BJ (cell line): ENCODE measurements at regions of chr19 and their contacts with region 1.

Region 1: GRCh38 chr19:17390665-17391370 is 3.2 kb downstream of the CCDC194 start:
- DNase-seq: peak; percentile 52
- H3K4me3 ChIP-seq: peak overlapping the region; percentile 62
- H3K27me3 ChIP-seq: peaks cover 2% of the 10 kb centered on the region; the same call in 1 of the 2 replicates
- CTCF ChIP-seq: peak; percentile 63

Region 2: GRCh38 chr19:17292286-17293097 is 98.3 kb before region 1 on chr19:
- CTCF ChIA-PET with region 1: interaction called, 31 read pairs
- POLR2A ChIA-PET with region 1: no interaction called
- DNase-seq: peak; percentile 39
- H3K4me3 ChIP-seq: peak overlapping the region; percentile 58
- H3K27me3 ChIP-seq: no peaks in the 10 kb centered on the region
- CTCF ChIP-seq: peak; percentile 80

Region 3: DNA sequence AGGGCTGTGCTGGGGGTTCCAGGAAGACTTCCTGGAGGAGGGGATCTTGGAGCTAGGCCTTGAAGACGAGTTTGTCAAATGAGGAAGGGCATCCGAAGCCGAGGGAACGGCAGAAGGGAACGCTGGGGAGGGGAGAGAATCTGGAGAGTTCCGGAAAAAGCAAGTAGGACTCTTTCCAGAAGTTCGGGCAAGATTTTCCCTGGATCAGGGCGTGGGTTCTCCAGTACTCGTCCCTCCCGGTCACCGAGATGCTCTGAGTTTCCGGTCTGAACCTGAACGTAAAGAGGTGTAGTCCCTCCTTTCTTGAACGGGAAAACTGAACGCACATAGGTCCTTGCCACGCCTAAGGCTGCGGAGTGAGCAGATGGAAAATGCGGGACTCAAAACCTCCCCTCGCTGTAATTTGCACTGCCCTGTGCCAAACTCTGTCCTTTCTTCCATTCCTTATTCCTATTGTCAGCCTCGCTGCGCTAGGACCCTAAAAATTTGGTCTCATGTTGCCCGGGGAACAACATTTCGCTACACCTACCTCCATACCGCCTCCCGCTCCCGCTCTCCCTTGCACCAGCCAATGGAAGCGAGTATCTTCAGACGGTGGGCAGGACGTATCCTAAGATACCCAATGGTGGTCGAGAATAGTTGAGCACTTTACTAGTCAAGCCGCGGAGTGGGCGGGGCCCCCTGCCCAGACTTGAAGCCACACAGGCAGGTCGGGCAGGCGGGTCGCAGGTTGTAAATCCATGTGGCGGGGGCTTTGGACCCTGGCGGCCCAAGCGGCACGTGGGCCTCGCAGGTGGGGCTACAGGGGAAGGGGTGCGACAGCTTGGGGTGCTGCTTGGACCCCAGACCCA is 53.7 kb before region 1 on chr19 and contains the start of gene GTPBP3:
- CTCF ChIA-PET with region 1: interaction called, 121 read pairs
- POLR2A ChIA-PET with region 1: no interaction called
- DNase-seq: peak; percentile 86
- H3K4me3 ChIP-seq: peak within 1 kb of the TSS; percentile 72
- H3K27me3 ChIP-seq: no peaks in the 10 kb centered on the region
- CTCF ChIP-seq: no peak
- polyA plus RNA-seq, gene GTPBP3: 4.9 and 6.3 TPM in 2 replicates

Region 4: GRCh38 chr19:17370026-17370587 is 20.7 kb before region 1 on chr19:
- CTCF ChIA-PET with region 1: interaction called, 15 read pairs
- POLR2A ChIA-PET with region 1: no interaction called
- DNase-seq: no peak
- H3K4me3 ChIP-seq: no peak overlapping the region
- H3K27me3 ChIP-seq: no peaks in the 10 kb centered on the region
- CTCF ChIP-seq: no peak

Region 5: DNA sequence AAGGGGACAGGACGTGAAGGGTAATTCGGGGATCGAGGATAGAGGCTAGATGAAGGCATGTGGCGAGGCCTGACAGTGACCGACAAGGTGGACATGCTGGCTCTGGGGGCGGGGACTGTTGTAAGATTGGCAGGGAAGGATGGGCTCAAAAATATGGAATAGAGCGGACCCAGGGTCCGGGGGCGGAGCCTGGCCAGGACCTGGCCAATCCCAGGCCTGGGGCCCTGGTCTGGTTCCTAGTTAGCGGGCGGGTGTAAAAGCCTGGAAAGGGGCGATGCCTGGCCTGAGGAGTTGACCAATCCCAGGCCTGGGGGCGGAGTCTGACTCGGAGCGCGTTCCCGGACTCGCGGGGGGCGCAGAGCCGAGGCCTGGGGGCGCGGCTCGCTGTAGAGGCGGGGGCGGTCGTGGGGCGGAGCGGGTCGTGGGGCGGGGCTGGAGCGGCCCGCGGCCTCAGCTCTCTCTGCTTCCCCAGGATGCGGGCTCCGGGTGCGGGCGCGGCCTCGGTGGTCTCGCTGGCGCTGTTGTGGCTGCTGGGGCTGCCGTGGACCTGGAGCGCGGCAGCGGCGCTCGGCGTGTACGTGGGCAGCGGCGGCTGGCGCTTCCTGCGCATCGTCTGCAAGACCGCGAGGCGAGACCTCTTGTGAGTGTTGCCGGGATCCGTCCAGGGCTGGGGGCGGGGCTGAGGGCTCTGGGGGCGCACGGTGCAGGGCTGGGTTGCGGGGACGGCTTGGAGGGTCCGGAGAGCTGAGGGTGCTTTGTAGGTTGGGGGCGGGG is 79.4 kb after region 1 on chr19 and contains the start of gene SLC27A1:
- CTCF ChIA-PET with region 1: interaction called, 18 read pairs
- POLR2A ChIA-PET with region 1: no interaction called
- DNase-seq: peak; percentile 97
- H3K4me3 ChIP-seq: peak within 1 kb of the TSS; percentile 91
- H3K27me3 ChIP-seq: no peaks in the 10 kb centered on the region
- CTCF ChIP-seq: no peak
- polyA plus RNA-seq, gene SLC27A1: 12.0 and 18.8 TPM in 2 replicates

Region 6: DNA sequence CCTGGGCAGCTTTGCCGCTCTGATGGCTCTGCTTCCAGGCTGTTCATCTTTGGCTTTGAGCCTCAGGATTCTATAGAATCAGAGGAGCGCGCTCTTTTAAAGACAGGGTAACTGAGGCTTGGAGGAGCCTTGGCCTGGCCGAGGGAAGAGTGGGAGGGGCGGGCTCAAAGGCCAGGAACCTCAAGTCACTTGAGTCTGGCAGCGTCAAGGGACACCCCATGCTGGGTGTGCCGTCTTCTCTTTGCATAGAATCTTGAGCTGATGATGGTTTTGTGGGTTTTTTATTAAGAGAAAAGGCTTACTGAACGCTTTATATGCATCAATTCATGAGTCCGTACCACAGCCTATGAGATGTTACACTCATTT is 121.7 kb after region 1 on chr19:
- CTCF ChIA-PET with region 1: no interaction called
- POLR2A ChIA-PET with region 1: no interaction called
- DNase-seq: no peak
- H3K4me3 ChIP-seq: peak overlapping the region; percentile 96
- H3K27me3 ChIP-seq: no peaks in the 10 kb centered on the region
- CTCF ChIP-seq: no peak